PC-9 (cell line): ENCODE measurements at regions of chr6 and their contacts with region 1.

Region 1: GRCh38 chr6:43926634-43927524 is 156.9 kb downstream of the VEGFA start:
- DNase-seq: peak; percentile 86 to 99
- H3K4me3 ChIP-seq: peak overlapping the region; percentile 7; the same call in 1 of the 2 replicates
- H3K27ac ChIP-seq: peak overlapping the region; percentile 99
- H3K4me1 ChIP-seq: peaks cover 57% of the 10 kb centered on the region
- H3K27me3 ChIP-seq: no peaks in the 10 kb centered on the region
- CTCF ChIP-seq: no peak

Region 2: DNA sequence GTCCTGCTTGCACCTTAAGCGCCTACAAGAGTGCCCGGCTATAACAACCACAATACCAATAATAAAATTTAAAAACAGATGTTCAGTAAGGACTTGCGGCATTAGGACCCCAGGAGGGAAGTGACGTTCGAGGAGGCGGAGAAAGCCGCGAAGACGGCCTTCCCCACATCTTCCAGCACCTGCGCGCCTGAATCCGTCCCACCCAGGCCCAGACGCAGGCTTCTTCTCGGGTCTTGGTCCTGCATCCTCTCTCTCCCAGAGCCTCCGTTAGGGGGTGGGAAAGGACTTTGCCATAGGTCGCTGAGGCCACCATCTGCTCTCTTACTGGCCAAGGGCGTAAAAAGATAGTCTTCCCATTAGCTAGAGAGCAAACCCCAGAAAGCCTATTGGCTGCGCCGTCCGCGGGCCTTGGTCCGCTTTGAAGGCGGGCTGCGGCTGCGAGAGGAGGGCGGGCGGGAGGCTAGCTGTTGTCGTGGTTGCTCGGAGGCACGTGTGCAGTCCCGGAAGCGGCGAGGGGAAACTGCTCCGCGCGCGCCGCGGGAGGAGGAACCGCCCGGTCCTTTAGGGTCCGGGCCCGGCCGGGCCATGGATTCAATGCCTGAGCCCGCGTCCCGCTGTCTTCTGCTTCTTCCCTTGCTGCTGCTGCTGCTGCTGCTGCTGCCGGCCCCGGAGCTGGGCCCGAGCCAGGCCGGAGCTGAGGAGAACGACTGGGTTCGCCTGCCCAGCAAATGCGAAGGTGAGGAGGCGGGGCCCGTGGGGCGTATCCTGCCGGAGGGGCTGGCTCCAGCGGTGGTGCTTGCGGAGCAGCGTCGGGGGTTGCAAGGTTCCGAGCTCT is 997.7 kb before region 1 on chr6 and contains the start of gene CNPY3:
- CTCF ChIA-PET with region 1: no interaction called
- POLR2A ChIA-PET with region 1: no interaction called
- intact Hi-C with region 1: no loop called
- DNase-seq: peak; percentile 94
- H3K4me3 ChIP-seq: peak within 1 kb of the TSS; percentile 73
- H3K27ac ChIP-seq: peak within 1 kb of the TSS; percentile 67
- H3K4me1 ChIP-seq: peaks cover 16% of the 10 kb centered on the region
- H3K27me3 ChIP-seq: no peaks in the 10 kb centered on the region
- CTCF ChIP-seq: no peak
- total RNA-seq, gene CNPY3: 47.7 and 54.8 TPM in 2 replicates

Region 3: DNA sequence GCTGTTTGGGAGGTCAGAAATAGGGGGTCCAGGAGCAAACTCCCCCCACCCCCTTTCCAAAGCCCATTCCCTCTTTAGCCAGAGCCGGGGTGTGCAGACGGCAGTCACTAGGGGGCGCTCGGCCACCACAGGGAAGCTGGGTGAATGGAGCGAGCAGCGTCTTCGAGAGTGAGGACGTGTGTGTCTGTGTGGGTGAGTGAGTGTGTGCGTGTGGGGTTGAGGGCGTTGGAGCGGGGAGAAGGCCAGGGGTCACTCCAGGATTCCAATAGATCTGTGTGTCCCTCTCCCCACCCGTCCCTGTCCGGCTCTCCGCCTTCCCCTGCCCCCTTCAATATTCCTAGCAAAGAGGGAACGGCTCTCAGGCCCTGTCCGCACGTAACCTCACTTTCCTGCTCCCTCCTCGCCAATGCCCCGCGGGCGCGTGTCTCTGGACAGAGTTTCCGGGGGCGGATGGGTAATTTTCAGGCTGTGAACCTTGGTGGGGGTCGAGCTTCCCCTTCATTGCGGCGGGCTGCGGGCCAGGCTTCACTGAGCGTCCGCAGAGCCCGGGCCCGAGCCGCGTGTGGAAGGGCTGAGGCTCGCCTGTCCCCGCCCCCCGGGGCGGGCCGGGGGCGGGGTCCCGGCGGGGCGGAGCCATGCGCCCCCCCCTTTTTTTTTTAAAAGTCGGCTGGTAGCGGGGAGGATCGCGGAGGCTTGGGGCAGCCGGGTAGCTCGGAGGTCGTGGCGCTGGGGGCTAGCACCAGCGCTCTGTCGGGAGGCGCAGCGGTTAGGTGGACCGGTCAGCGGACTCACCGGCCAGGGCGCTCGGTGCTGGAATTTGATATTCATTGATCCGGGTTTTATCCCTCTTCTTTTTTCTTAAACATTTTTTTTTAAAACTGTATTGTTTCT is 157.1 kb before region 1 on chr6 and contains the start of gene VEGFA:
- CTCF ChIA-PET with region 1: interaction called, 7 read pairs
- POLR2A ChIA-PET with region 1: no interaction called
- intact Hi-C with region 1: loop called (anchors 1 kb)
- DNase-seq: peak; percentile 76 to 85
- H3K4me3 ChIP-seq: peak within 1 kb of the TSS; percentile 90
- H3K27ac ChIP-seq: peak within 1 kb of the TSS; percentile 94
- H3K4me1 ChIP-seq: peaks cover 12% of the 10 kb centered on the region
- H3K27me3 ChIP-seq: no peaks in the 10 kb centered on the region
- CTCF ChIP-seq: peak; percentile 99
- total RNA-seq, gene VEGFA: 112 and 117 TPM in 2 replicates

Region 4: GRCh38 chr6:43803783-43804549 is 122.9 kb before region 1 on chr6:
- CTCF ChIA-PET with region 1: no interaction called
- POLR2A ChIA-PET with region 1: no interaction called
- intact Hi-C with region 1: loop called (anchors 2 kb)
- DNase-seq: peak; percentile 58 to 88
- H3K4me3 ChIP-seq: 0 out of 2 replicates have a peak overlapping the region, but pooled peaks have one; percentile 10
- H3K27ac ChIP-seq: peak overlapping the region; percentile 73
- H3K4me1 ChIP-seq: peaks cover 87% of the 10 kb centered on the region
- H3K27me3 ChIP-seq: no peaks in the 10 kb centered on the region
- CTCF ChIP-seq: no peak

Region 5: GRCh38 chr6:43951063-43951755 is 24.3 kb after region 1 on chr6:
- CTCF ChIA-PET with region 1: interaction called, 3 read pairs
- POLR2A ChIA-PET with region 1: no interaction called
- intact Hi-C with region 1: loop called (anchors 2 kb)
- DNase-seq: peak; percentile 44 to 62
- H3K4me3 ChIP-seq: no peak overlapping the region
- H3K27ac ChIP-seq: no peak overlapping the region
- H3K4me1 ChIP-seq: peaks cover 21% of the 10 kb centered on the region
- H3K27me3 ChIP-seq: no peaks in the 10 kb centered on the region
- CTCF ChIP-seq: peak; percentile 63

Region 6: GRCh38 chr6:44041461-44042260 is 114.8 kb after region 1 on chr6:
- CTCF ChIA-PET with region 1: no interaction called
- POLR2A ChIA-PET with region 1: no interaction called
- intact Hi-C with region 1: loop called (anchors 2 kb)
- DNase-seq: peak; percentile 86 to 94
- H3K4me3 ChIP-seq: peak overlapping the region; percentile 49; the same call in 1 of the 2 replicates
- H3K27ac ChIP-seq: peak overlapping the region; percentile 99
- H3K4me1 ChIP-seq: peaks cover 82% of the 10 kb centered on the region
- H3K27me3 ChIP-seq: no peaks in the 10 kb centered on the region
- CTCF ChIP-seq: no peak; the same call in 1 of the 2 replicates